ENCODE measurements at regions of chr7 and their contacts with region 1.

Region 1: DNA sequence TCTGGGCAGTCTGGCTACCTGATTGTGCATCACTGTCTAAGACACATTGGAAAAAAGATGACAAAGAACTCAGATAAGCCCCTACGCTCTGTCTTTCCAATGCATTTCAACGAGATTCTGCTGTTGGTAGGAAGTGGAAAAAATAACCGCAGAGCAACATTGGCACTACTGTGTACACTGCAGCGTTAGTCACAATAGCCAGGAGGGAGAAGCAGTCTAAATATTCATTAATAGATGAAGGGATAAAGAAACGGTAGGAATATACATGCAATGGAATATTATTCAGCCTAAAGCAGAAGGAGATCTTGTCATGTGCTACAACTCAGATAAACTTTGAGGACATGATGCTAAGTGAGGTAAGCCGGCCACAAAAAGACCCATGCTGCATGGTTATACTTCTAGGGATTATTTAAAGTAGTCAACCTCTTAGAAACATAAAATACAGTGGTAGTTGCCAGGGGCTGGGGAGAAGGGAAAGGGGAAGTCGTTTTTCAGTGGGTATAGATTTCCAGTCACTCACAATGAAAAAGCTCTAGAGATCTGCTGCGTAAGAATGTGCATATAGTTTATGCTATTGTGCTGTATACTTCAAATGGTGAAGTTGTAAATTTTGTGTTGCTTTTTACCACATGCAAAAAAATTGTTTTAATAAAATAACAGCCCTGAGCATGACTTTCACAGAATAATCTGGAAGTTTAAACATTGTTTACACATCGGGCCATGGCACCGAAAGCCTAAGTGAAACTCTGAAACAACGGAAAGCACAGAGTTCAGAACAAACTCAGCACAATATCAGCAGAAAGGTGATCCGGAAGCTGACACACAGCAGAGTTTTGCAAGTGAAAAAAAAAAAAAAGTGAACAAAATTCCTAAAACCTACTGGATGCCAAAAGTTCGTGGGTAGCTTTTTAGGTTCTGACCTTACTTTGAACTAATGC is 40.1 kb downstream of the ELMO1 start:
- DNase-seq: peak; percentile 44
- H3K4me3 Mint-ChIP-seq: peak overlapping the region; percentile 77
- H3K27ac Mint-ChIP-seq: peak overlapping the region; percentile 98
- H3K4me1 Mint-ChIP-seq: peaks cover 87% of the 10 kb centered on the region
- H3K27me3 Mint-ChIP-seq: no peaks in the 10 kb centered on the region

Region 2: DNA sequence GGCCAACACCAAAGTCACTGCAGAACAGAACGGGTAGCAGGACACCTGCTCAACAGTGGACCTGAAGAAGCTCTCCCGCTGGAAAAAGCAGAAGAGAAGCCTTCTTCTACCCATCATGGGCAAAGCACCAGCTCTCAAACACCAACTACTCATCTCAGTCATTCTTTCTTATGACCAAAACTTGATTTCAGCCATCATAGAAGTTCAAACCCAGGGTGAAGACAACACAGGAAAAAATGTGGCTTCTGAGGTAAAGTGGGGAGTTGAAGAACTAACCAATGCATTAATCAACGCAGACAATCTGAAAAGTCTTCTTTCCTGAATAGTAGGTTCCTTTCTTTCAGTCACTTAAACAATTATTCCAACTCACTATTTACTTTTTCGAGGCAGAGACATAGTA is 43.2 kb before region 1 on chr7:
- CTCF ChIA-PET with region 1: interaction called, 7 read pairs
- intact Hi-C with region 1: loop called (anchors 1 kb)
- DNase-seq: no peak
- H3K4me3 Mint-ChIP-seq: peak overlapping the region; percentile 15
- H3K27ac Mint-ChIP-seq: peak overlapping the region; percentile 99
- H3K4me1 Mint-ChIP-seq: peaks cover 88% of the 10 kb centered on the region
- H3K27me3 Mint-ChIP-seq: no peaks in the 10 kb centered on the region

Region 3: GRCh38 chr7:37376386-37376785 is 32.2 kb before region 1 on chr7:
- CTCF ChIA-PET with region 1: interaction called, 7 read pairs
- intact Hi-C with region 1: loop called (anchors 1 kb)
- DNase-seq: peak; percentile 69
- H3K4me3 Mint-ChIP-seq: no peak overlapping the region
- H3K27ac Mint-ChIP-seq: peak overlapping the region; percentile 65
- H3K4me1 Mint-ChIP-seq: peaks cover 68% of the 10 kb centered on the region
- H3K27me3 Mint-ChIP-seq: no peaks in the 10 kb centered on the region

Region 4: DNA sequence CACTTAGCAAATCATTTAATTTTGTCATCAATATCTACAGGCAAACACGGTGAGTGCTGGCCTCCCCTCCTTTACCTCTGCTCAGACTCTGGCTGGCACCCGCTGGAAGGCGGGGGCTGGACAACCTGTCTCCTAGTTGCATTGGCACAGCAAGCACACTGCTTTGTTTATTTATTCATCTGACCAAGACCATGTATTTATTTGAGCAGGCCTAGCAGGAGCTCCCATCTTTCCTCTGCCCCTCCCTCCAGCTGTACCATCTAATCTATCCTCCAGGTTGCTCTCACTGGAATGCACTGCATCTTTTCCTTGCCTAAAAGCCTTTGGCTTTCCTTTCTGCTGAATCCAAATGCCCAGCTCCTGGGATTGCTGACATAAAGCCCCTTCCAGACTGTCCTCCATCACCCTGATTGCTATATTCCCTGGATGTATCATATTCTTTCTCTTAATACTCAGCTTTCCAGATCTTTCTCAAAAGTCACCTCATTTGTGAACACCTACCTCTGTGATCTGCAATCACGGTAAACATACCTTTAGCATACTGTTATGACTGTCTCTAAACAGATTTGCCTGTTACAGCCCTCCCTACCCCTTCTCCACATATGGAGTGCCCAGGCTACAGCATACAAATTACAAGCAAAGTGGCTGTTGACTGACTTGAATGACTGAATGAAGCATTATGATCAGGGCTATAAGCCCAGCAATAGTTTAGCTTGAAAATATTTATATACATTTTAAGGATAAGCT is 30.5 kb after region 1 on chr7:
- CTCF ChIA-PET with region 1: interaction called, 5 read pairs
- intact Hi-C with region 1: loop called (anchors 1 kb)
- DNase-seq: no peak
- H3K4me3 Mint-ChIP-seq: no peak overlapping the region
- H3K27ac Mint-ChIP-seq: peak overlapping the region; percentile 97
- H3K4me1 Mint-ChIP-seq: peaks cover 92% of the 10 kb centered on the region
- H3K27me3 Mint-ChIP-seq: no peaks in the 10 kb centered on the region